ENCODE measurements at regions of chr12 and their contacts with region 1.

Region 1: GRCh38 chr12:130041983-130042812 is 120.1 kb upstream of the FZD10 start:
- H3K4me3 Mint-ChIP-seq: no peak overlapping the region
- H3K27ac Mint-ChIP-seq: no peak overlapping the region
- H3K4me1 Mint-ChIP-seq: no peaks in the 10 kb centered on the region
- H3K27me3 Mint-ChIP-seq: peaks cover 31% of the 10 kb centered on the region

Region 2: DNA sequence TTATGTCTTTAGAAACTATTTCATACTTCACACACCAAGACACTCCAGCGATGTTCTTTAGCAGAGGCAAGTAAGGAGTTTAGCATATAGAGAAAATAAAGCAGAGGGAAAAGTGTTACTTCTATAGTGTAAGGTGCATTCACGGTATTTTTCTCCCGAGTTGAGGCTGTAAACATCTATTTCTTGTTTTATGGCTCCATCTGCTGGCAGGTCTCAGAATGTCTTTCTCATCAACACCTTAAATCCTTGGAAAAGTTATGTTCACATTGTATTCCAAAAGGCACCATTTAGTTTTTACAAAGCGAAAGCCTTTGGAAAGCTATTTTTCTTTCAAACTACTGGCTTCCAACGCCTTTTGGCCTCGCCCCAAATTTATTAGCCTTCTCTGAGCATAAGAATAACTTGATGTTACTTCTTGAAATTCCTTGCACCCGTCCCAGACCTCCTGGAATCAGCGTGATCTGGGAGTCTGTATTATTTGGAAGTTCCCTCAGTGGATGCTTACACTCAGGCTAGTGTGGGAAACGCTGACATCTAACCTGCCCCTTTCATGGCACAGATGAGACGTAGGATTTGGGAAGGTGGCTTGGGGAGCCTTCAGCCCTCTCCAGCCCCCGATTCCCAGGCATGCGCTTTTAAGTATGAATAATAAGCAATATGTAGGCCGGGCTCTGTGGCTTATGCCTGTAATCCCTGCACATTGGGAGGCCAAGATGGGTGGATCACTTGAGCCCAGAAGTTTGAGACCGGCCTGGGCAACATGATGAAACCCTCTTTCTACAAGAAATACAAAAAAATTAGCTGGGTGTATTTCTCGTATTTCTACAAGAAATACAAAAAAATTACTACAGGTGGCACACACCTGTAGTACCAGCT is 293.6 kb after region 1 on chr12:
- intact Hi-C with region 1: loop called (anchors 1 kb)
- H3K4me3 Mint-ChIP-seq: no peak overlapping the region
- H3K27ac Mint-ChIP-seq: no peak overlapping the region
- H3K4me1 Mint-ChIP-seq: no peaks in the 10 kb centered on the region
- H3K27me3 Mint-ChIP-seq: peaks cover 12% of the 10 kb centered on the region

Region 3: DNA sequence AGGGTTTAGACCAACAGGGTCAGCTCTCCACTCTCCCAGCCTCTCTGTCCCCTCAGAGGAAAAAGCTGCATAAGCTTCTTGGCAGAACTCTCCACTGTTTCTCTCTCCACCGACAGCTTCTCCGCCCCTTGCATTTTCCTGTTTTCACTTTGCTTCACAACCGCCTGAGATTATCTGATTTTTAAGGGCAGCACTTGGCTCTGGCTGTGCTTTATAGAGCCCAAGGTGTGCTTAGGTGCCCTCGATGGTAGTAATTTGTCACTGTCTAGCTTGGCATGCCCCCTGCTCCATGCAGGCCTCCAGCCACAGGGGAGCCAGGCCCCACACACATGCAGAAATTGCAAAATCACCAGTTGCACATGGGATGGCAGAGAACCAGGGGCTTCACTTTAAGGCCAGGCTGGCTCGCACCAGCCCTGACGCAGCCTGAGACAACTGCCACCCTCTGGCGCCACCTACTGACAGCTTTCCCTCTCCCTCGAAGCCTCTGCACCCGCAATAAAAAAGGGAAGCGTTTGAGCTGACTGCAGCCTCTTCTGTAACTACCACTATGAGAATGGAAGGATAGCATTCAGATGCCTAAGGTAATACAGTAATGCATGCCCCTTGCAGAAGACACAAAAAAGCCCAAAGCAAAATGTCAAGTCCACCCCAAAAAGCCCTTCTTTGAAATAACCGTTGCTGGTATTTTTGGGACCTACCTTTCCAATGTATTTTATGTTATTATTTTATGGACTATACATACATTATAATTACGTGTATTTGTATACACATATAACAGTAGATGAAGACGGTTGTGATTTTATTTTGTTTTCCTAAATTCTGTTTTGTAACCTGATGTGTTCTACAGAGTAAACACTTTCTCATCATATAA is 705.9 kb after region 1 on chr12:
- intact Hi-C with region 1: loop called (anchors 10 kb)
- H3K4me3 Mint-ChIP-seq: no peak overlapping the region
- H3K27ac Mint-ChIP-seq: no peak overlapping the region
- H3K4me1 Mint-ChIP-seq: peaks cover 4% of the 10 kb centered on the region
- H3K27me3 Mint-ChIP-seq: peaks cover 6% of the 10 kb centered on the region